Cardiac septum (tissue), 1 donor: ENCODE measurements at regions of chr14 and their contacts with region 1.

Region 1: GRCh38 chr14:32576088-32576795 is 247.1 kb downstream of the AKAP6 start:
- DNase-seq: no peak

Region 2: DNA sequence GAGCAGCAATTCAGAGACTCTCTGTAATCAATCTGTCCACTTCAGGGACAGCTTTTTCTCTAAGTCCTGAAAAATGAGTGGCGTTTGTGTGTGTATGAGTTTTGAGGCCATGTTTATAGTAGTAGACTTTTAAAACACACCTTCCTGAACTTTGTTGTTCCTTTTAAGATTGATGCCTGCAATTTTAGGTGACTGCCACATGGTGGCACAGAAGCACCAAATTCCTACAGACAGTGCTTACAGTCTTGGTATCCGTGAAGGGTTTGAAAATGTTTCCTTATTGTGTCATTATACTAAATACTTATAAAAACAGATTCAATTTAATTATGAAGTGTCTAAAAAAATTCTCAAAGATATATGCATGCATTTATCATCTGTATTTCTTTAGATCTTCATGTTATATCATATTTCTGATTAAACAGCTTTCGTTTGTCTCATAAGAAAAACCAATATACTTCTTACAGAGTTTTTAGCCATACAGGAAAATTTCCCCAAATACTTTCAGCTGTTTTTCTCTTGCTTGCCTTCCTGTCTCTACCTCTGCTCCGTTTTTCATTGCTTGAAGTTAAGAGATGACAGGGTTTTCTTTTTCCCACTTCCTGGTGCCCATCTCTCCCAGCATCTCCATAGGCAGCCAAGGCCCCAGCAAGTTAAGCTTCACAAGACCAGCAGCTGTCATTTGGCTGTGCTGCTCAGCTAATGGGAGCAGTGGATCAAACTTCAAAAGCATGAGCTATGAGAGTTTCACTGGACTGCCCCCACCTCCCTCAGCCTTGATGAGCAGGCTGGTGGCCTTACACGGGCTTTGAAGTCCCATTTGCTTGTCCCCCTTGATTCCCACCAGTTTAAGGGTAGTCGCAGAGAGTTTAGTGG is 12.4 kb after region 1 on chr14:
- intact Hi-C with region 1: no loop called
- DNase-seq: no peak

Region 3: GRCh38 chr14:32826404-32827082 is 250.3 kb after region 1 on chr14:
- intact Hi-C with region 1: loop called (anchors 2 kb)
- DNase-seq: no peak

Region 4: DNA sequence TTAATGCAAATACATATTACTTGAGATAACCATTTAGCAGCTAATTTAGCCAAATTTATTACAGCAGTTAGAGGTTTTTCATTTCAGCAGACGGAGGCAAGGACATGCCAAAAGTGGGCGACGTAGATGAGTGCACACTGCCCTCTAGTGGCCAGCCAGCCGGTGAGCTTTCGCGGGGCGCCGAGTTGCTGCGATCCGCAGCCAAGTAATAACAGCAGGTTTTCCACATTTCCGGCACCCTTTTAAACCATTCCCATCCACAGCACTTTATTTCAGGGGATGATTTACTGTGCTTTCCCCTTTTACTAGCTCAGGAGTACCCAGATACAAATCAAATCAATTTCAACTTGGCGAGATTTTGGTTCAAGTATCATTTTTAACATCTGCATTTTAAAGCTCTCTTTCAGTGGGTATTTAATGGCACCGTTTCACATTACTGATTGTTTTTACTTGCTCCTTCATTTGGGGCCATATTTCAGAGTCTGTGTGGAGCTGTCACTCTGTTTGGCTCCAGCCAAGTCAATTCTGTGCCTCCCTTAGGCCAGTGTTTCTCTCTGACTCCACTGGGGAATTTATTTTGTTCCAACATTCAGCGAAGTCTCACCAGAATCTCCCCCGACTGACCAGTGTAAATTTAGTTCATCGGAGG is 1216.6 kb after region 1 on chr14:
- intact Hi-C with region 1: loop called (anchors 5 kb)
- DNase-seq: peak; percentile 84

Region 5: GRCh38 chr14:34322940-34323418 is 1746.7 kb after region 1 on chr14:
- intact Hi-C with region 1: loop called (anchors 10 kb)
- DNase-seq: peak; percentile 82